ENCODE measurements at regions of chr7 and their contacts with region 1.

Region 1: DNA sequence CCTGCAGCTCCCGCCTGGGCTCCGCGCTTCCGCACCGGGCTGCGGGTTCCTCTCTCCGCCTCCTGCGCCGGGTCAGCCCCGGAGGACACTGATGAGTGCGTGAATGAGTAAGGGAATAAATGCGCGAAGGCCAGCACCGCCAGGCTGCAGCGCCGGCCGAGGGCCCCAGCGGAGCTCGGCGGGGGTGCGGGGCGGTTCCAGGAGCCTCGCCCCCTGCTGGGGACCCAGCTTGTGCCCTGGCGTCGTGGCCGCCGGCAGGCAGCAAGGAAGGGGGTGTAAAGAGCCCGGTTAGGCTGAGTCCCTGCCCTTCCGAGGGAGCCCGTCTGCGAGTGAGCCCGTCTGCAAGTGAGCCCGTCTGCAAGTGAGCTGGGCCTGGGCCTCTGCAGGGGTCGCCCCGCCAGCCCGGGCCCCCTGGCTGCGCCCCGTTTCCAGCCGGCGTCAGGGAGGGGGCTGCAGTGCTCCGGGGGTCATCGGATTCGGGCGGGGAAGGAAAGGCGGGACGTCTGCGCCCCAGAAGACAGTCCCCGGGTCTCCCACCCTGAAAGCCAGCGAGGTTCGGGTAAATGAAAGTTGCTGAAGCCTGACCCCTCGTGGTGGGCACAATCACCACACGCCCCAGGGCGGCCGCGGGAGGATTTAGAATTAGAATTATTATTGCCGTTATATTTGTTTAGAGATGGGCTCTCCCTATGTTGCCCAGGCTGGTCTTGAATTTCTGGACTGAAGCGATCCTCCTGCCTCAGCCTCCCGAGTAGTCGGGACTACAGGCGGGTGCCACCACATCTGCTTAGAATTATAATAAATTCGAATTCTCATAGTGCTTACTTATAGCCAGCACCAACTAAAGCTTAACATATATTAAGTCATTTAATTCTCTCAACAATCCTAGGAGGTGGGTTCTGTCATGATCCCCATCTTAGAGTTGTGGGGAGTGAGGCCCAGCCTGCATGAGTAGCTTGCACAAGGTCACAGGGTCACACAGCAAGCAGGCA is 8.6 kb upstream of the CRYGN start:
- DNase-seq: no peak
- ATAC-seq: peak; percentile 91

Region 2: GRCh38 chr7:151181011-151181431 is 267.5 kb before region 1 on chr7:
- intact Hi-C with region 1: no loop called
- DNase-seq: peak; percentile 60
- ATAC-seq: no peak

Region 3: GRCh38 chr7:151368136-151368571 is 80.4 kb before region 1 on chr7:
- intact Hi-C with region 1: loop called (anchors 1 kb)
- DNase-seq: peak; percentile 88
- ATAC-seq: peak; percentile 95

Region 4: DNA sequence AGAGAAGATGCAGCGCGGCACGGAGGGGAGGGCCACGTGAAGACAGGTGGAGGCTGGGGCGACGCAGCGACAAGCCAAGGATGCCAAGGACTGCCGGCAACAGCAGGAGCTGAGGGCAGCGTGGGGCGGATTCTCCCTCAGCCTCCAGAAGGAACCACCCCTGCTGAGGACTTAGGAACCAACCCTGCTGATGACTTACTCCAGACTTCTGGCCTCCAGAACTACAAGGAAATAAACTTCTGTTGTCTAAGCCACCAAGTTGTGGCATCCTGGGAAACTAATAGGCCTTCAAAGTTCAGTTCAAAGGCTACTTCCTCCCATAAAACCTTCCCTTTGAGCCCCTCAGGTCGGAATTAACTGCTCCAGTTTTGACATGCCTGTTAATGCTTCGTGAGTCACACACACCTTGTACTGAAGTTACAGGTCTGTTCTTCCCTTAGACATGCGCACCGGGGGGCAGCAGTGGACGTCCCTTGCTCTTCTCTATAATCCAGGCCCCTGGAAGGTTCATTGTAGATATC is 159.5 kb after region 1 on chr7:
- intact Hi-C with region 1: no loop called
- DNase-seq: no peak
- ATAC-seq: no peak

Region 5: DNA sequence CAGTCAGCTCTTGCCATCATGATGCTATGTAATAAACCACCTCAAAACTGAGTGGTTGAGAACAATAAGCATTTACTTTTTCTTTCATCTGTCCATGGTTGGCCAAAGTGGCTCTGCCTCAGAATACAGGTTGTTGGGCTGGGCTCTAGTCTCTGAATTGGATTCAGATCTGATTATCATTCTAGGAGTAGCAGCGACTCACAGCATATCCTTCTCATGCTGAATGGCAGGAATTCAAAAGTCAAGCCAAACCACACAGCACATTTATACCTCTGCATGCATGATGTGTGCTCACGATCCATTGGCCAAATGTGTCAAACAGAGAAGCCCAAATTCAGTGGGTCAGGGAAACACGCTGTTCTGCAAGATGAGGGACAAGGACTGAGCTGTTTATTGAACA is 563.3 kb after region 1 on chr7:
- intact Hi-C with region 1: no loop called
- DNase-seq: no peak
- ATAC-seq: no peak